Activated CD4-positive, alpha-beta memory T cell treated with anti-CD3 and anti-CD28 coated beads for 36 hours (primary cell): ENCODE measurements at regions of chr4 and their contacts with region 1.

Region 1: GRCh38 chr4:10655986-10656385 is 28.6 kb downstream of the CLNK start:
- DNase-seq: no peak
- H3K4me3 Mint-ChIP-seq: no peak overlapping the region
- H3K27ac Mint-ChIP-seq: no peak overlapping the region
- H3K4me1 Mint-ChIP-seq: peaks cover 24% of the 10 kb centered on the region
- H3K27me3 Mint-ChIP-seq: peaks cover 8% of the 10 kb centered on the region

Region 2: DNA sequence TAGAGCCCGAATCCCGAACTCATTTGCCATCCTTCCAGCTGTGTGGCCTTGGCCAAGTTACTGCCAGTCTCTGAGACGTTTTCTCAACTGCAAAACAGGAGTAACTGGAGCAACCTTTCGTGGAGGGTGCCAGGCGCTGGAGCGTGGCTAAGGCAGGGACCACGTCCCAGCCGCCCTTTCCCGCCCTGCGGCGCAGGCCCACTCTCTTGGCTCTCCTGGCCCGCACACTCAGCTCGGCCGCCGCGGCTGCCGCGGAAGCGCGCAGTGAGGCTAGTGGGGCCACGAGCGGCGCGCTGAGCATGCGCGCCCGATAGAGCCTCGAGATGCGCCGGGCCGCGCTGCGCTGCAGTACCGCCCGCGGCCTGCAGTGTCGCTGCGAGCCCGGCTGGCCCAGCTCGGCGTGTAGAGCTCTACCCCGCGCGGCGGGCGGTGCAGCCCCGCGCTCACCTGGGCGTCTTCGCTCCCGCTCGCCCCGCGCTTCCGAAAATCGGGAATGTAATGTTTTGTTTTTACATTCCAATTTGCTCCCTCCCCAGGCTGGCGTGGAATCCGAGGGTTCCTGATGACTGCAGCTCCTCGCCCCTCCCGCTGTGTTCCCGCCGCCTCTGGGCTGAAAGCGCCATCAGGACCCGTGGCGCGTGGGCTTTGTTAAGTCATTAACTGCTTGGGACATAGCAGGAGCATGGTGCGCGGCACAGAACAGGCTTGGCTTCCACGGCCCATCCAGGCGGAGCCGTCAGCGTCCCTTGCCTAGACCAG is 194.7 kb before region 1 on chr4:
- CTCF ChIA-PET with region 1: no interaction called
- POLR2A ChIA-PET with region 1: no interaction called
- intact Hi-C with region 1: loop called (anchors 5 kb)
- DNase-seq: peak; percentile 78
- H3K4me3 Mint-ChIP-seq: peak overlapping the region; percentile 72
- H3K27ac Mint-ChIP-seq: no peak overlapping the region
- H3K4me1 Mint-ChIP-seq: peaks cover 25% of the 10 kb centered on the region
- H3K27me3 Mint-ChIP-seq: peaks cover 33% of the 10 kb centered on the region

Region 3: DNA sequence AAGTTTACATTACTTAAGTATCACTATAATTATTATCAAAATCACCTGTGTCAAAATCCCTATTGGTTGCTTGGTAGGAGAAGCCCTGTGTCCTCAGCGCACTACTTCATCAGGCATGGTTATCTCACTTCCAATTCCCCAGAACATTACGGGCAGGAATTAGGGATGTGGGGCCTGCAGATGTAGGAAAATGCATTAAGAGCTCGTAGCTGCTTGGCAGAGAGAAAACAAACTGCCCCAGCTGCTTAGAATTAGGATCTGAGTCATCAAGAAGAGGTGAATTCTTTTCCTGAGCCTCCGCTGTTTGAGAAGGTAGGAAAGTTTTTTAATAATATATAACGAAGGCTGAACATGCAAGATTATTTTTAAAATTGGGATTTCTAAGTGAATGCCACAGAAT is 59.7 kb after region 1 on chr4:
- CTCF ChIA-PET with region 1: no interaction called
- POLR2A ChIA-PET with region 1: no interaction called
- intact Hi-C with region 1: loop called (anchors 5 kb)
- DNase-seq: no peak
- H3K4me3 Mint-ChIP-seq: no peak overlapping the region
- H3K27ac Mint-ChIP-seq: no peak overlapping the region
- H3K4me1 Mint-ChIP-seq: peaks cover 3% of the 10 kb centered on the region
- H3K27me3 Mint-ChIP-seq: peaks cover 12% of the 10 kb centered on the region

Region 4: GRCh38 chr4:10730590-10730989 is 74.6 kb after region 1 on chr4:
- CTCF ChIA-PET with region 1: no interaction called
- POLR2A ChIA-PET with region 1: no interaction called
- intact Hi-C with region 1: loop called (anchors 5 kb)
- DNase-seq: no peak
- H3K4me3 Mint-ChIP-seq: no peak overlapping the region
- H3K27ac Mint-ChIP-seq: peak overlapping the region; percentile 43
- H3K4me1 Mint-ChIP-seq: peaks cover 39% of the 10 kb centered on the region
- H3K27me3 Mint-ChIP-seq: peaks cover 7% of the 10 kb centered on the region

Region 5: GRCh38 chr4:11155208-11155867 is 499.4 kb after region 1 on chr4:
- CTCF ChIA-PET with region 1: no interaction called
- POLR2A ChIA-PET with region 1: no interaction called
- intact Hi-C with region 1: no loop called
- DNase-seq: no peak
- H3K4me3 Mint-ChIP-seq: no peak overlapping the region
- H3K27ac Mint-ChIP-seq: no peak overlapping the region
- H3K4me1 Mint-ChIP-seq: no peaks in the 10 kb centered on the region
- H3K27me3 Mint-ChIP-seq: no peaks in the 10 kb centered on the region